ENCODE measurements at regions of chr1 and their contacts with region 1.

Region 1: GRCh38 chr1:7827126-7827955 is 25.5 kb downstream of the UTS2 start:
- DNase-seq: no peak
- ATAC-seq: no peak
- H3K4me3 ChIP-seq: peak overlapping the region; percentile 41
- H3K27ac ChIP-seq: no peak overlapping the region
- H3K4me1 ChIP-seq: peaks cover 6% of the 10 kb centered on the region
- H3K27me3 ChIP-seq: no peaks in the 10 kb centered on the region
- CTCF ChIP-seq: no peak

Region 2: DNA sequence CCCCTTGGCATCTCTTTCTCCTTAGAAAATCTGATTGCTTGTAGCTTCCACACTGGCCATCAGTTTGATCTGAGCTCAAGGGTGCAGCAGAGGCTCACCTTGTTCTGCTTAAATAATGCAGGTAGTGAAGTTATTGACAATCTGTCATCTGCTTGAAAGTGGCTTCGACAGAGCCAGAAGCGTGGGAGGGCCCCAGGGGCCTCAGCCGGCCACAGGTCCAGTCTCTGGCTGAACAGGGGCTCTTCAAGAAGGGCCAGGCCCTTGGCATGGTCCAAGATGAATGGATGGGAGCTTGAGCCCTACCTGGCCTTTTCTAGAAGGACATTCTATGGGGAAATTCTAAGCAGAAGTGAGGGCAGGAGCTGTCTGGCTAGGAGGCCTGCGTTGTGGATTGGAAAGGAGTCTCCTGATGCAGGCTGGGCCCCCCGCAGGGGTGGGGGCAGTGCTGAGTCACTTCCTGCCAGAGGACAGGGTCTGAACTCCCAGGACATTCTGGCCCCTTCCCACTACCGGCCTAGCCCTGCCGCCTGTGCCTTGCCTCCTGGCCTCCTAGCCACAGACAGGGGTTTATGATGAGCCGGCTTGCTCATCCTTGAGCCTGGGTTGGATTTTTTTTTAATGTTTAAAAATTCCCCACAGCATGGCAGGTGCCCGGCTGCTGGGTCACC is 218.6 kb before region 1 on chr1:
- intact Hi-C with region 1: no loop called
- DNase-seq: no peak
- ATAC-seq: no peak
- H3K4me3 ChIP-seq: no peak overlapping the region
- H3K27ac ChIP-seq: no peak overlapping the region
- H3K4me1 ChIP-seq: no peaks in the 10 kb centered on the region
- H3K27me3 ChIP-seq: peaks cover 0 to 4% (median 0%) of the 10 kb centered on the region in 3 donors
- CTCF ChIP-seq: no peak

Region 3: GRCh38 chr1:7783826-7784491 is 43.4 kb before region 1 on chr1 and contains the start of gene PER3:
- intact Hi-C with region 1: loop called in 1 of 2 experiments (anchors 5 kb)
- DNase-seq: peak; percentile 99
- ATAC-seq: peak; percentile 93 to 97 (median 94)
- H3K4me3 ChIP-seq: peak within 1 kb of the TSS; percentile 89
- H3K27ac ChIP-seq: peak within 1 kb of the TSS; percentile 96
- H3K4me1 ChIP-seq: peaks cover 17% of the 10 kb centered on the region
- H3K27me3 ChIP-seq: no peaks in the 10 kb centered on the region
- CTCF ChIP-seq: no peak
- total RNA-seq, gene PER3: 4.8 to 15.1 (median 10.5) TPM

Region 4: GRCh38 chr1:7789828-7790227 is 37.5 kb before region 1 on chr1:
- intact Hi-C with region 1: loop called (anchors 5 kb)
- DNase-seq: no peak
- ATAC-seq: no peak
- H3K4me3 ChIP-seq: no peak overlapping the region
- H3K27ac ChIP-seq: no peak overlapping the region
- H3K4me1 ChIP-seq: peaks cover 14% of the 10 kb centered on the region
- H3K27me3 ChIP-seq: no peaks in the 10 kb centered on the region
- CTCF ChIP-seq: no peak

Region 5: DNA sequence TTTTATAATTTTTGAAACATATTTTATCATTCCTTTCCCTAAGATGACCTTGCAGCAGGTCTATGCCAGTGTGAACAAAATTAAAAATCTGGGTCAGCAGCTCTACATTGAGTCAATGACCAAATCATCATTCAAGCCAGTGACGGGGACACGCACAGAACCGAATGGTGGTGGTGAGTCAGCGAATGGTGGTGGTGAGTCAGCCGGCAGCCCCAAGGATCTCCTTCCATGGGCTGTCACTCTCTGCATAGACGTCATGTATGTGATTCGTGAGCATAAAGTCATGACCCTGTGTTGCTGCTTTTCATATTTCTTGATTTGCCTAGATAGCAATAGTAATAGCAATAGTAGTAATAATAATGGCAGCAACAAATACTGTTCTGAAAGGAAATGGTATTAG is 16.9 kb before region 1 on chr1:
- intact Hi-C with region 1: loop called in 1 of 2 experiments (anchors 1 kb)
- DNase-seq: peak in 1 of 2 donors; percentile 38
- ATAC-seq: peak; percentile 52 to 92 (median 56)
- H3K4me3 ChIP-seq: no peak overlapping the region
- H3K27ac ChIP-seq: no peak overlapping the region
- H3K4me1 ChIP-seq: no peaks in the 10 kb centered on the region
- H3K27me3 ChIP-seq: no peaks in the 10 kb centered on the region
- CTCF ChIP-seq: no peak

Region 6: DNA sequence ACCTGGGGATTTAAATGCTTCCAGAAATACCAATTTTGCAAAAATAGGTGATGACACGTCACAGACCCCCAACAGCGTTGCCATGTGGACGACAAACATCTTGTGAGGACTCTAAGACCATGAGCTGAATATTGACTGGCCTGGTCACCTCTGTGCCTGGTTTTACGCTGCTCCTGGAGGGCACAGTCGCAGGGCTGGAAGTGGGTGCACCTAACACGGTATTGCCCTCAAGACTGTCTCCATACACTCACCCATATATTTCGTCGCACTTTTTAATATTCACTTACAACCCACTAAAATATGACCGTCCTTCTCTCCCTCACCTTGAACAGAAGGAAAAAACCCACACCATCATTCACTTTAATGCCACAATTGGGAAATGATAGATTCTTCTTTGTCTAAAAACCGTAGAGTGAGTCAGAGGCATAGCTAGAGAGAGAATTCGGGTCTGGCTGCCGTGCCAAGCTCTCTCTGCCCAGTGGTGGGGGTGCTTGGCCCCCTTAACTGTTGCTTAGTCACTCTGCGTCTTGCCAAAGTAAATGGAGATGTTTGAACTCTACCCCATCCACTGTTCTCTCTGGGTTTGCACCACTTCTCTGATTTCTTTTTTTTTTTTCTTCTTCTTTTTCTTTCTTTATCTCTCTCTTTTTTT is 66.3 kb after region 1 on chr1:
- intact Hi-C with region 1: no loop called
- DNase-seq: peak in 1 of 2 donors; percentile 33
- ATAC-seq: peak; percentile 46 to 85 (median 77)
- H3K4me3 ChIP-seq: no peak overlapping the region
- H3K27ac ChIP-seq: no peak overlapping the region
- H3K4me1 ChIP-seq: no peaks in the 10 kb centered on the region
- H3K27me3 ChIP-seq: peaks cover 0 to 10% (median 0%) of the 10 kb centered on the region in 3 donors
- CTCF ChIP-seq: no peak

Measured in psoas muscle (tissue), 8 donors.